ENCODE measurements at regions of chr19 and their contacts with region 1.

Region 1: GRCh38 chr19:44845612-44846454 is at the start of gene NECTIN2:
- DNase-seq: peak; percentile 100
- ATAC-seq: peak; percentile 80 to 87
- H3K4me3 ChIP-seq: peak within 1 kb of the TSS; percentile 98
- H3K27ac ChIP-seq: peak within 1 kb of the TSS; percentile 95
- H3K4me1 ChIP-seq: peaks cover 7% of the 10 kb centered on the region
- H3K27me3 ChIP-seq: no peaks in the 10 kb centered on the region
- total RNA-seq, gene NECTIN2: 47.8 to 106 (median 57.5) TPM

Region 2: GRCh38 chr19:44570984-44571684 is 274.7 kb before region 1 on chr19:
- intact Hi-C with region 1: loop called in 1 of 4 experiments (anchors 10 kb)
- DNase-seq: peak in 1 of 3 donors; percentile 26
- ATAC-seq: peak; percentile 81
- H3K4me3 ChIP-seq: no peak overlapping the region
- H3K27ac ChIP-seq: no peak overlapping the region
- H3K4me1 ChIP-seq: no peaks in the 10 kb centered on the region
- H3K27me3 ChIP-seq: no peaks in the 10 kb centered on the region

Region 3: GRCh38 chr19:44723952-44724319 is 121.9 kb before region 1 on chr19:
- intact Hi-C with region 1: loop called in 1 of 4 experiments (anchors 2 kb)
- DNase-seq: peak; percentile 81 to 93 (median 92)
- ATAC-seq: peak; percentile 88 to 90
- H3K4me3 ChIP-seq: no peak overlapping the region
- H3K27ac ChIP-seq: peak overlapping the region; percentile 23
- H3K4me1 ChIP-seq: peaks cover 13% of the 10 kb centered on the region
- H3K27me3 ChIP-seq: no peaks in the 10 kb centered on the region

Region 4: DNA sequence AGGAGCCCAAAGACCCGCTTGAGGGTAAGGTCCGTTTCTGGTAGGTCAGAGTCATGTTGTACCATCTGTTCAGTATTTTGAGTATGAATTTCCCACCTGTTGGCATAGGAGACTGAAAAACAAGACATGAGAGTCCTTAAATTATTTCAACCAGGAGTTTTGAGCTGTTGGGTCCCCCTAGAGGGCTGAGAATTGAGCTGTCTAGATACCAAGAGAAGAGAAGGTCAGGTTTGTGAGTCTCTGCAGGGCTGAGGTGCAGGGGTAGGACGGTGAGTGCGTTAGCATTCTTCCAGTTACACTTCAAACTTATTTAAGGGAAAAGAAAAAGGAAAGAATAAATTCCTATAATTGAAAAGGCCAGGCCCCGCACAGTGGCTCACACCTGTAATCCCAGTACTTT is 63.1 kb before region 1 on chr19:
- intact Hi-C with region 1: loop called in 1 of 4 experiments (anchors 2 kb)
- DNase-seq: peak in 2 of 3 donors; percentile 5 to 10
- ATAC-seq: no peak
- H3K4me3 ChIP-seq: no peak overlapping the region
- H3K27ac ChIP-seq: no peak overlapping the region
- H3K4me1 ChIP-seq: no peaks in the 10 kb centered on the region
- H3K27me3 ChIP-seq: no peaks in the 10 kb centered on the region

Region 5: GRCh38 chr19:44800461-44800860 is 45.4 kb before region 1 on chr19:
- intact Hi-C with region 1: loop called (anchors 2 to 5 kb)
- DNase-seq: peak; percentile 86 to 95 (median 94)
- ATAC-seq: peak; percentile 91 to 92
- H3K4me3 ChIP-seq: no peak overlapping the region
- H3K27ac ChIP-seq: no peak overlapping the region
- H3K4me1 ChIP-seq: peaks cover 2% of the 10 kb centered on the region
- H3K27me3 ChIP-seq: no peaks in the 10 kb centered on the region

Region 6: DNA sequence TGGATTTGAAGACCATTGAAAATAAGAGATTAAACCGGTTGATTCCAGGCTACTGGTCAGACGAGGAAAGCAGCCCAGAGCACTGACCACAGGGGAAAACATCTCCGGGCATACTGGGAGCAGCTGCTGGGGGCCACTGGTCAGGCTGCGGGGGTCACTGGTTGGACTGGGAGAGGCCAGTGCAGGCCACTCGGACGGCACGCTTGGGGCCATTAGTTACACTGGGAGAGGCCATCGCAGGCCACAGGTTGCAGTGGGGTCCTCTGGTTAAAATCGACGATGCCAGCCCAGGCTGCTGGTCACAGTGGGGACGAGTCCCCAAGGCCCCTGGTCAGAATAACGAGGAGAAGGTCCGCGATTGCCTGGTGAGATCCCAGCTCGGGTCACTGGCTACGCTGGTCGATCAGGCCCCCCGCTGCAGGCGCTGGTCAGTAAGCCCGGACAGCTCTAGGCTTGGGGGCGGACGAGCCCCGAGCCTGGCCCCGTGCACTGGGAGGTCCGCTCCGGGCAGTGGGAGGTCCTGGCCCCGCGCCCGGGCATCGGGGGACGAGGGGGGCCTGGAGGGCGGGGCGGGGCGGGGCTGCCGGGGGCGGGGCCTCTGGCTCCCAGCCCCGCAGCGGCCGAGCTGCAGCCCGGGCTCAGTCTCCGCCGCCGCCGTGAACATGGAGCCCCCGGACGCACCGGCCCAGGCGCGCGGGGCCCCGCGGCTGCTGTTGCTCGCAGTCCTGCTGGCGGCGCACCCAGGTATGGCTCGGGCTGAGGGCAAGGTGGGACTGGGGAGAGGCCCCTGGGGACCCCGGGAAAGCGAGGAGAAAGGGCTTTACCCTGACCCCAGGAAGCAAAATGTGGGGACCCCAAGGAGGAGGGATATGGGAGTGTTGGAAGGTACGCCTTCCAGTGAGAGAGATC is 37.1 kb before region 1 on chr19 and contains the start of gene BCAM:
- intact Hi-C with region 1: loop called in 3 of 4 experiments (anchors 5 kb)
- DNase-seq: peak; percentile 84 to 96 (median 95)
- ATAC-seq: peak; percentile 89 to 94
- H3K4me3 ChIP-seq: peak within 1 kb of the TSS; percentile 66
- H3K27ac ChIP-seq: peak within 1 kb of the TSS; percentile 67
- H3K4me1 ChIP-seq: peaks cover 4% of the 10 kb centered on the region
- H3K27me3 ChIP-seq: no peaks in the 10 kb centered on the region
- total RNA-seq, gene BCAM: 69.9 to 130 (median 80.1) TPM

Measured in right cardiac atrium (tissue), 5 donors.